B cell (primary cell): ENCODE measurements at regions of chr1 and their contacts with region 1.

Region 1: GRCh38 chr1:59699227-59699847 is 115.4 kb upstream of the HOOK1 start:
- DNase-seq: peak; percentile 67
- ATAC-seq: peak; percentile 44
- H3K4me3 ChIP-seq: no peak overlapping the region
- H3K4me3 Mint-ChIP-seq: no peak overlapping the region
- H3K27ac ChIP-seq: no peak overlapping the region
- H3K27ac Mint-ChIP-seq: no peak overlapping the region
- H3K4me1 ChIP-seq: peaks cover 24 to 29% of the 10 kb centered on the region in 2 donors
- H3K4me1 Mint-ChIP-seq: peaks cover 26% of the 10 kb centered on the region
- H3K27me3 ChIP-seq: no peaks in the 10 kb centered on the region
- H3K27me3 Mint-ChIP-seq: no peaks in the 10 kb centered on the region
- CTCF ChIP-seq: peak; percentile 97

Region 2: DNA sequence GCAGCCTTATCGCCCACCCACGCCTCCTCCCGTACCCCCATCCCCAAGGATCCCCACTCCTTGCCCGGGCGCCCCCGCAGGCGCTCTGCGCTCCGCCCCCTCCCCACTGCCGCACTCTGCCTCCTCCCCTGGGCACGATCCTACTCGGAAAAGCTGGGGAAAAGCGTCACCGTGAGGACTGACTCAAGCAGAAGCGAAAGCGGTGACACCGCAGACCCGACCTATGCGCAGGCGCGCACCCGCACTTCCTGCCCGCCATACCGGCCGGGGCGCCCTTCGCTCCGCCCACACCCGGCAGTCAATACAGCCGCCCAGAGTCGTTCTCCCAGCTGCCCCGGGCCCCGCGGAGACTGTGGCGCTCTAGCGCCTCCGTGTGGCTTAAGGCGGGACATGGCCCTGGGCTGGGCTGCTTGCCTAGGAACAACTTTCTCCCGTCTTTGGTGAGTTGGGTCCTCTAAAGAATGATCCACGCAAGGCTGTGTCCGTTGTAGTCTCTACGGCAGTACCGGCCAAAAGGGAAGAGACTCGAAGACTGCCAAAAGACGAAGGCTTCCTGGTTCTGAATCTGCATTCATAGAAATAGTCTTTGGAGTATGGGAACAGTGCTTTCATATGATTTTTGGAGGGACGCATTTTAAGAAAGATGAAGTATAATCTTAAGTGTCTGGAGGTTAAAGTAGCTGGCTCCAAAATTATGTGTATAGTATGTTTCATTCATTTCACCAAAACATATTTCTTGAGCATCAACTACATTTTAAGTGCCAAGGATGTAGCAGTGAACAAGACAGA is 1152.6 kb before region 1 on chr1 and contains the start of gene OMA1:
- CTCF ChIA-PET with region 1: interaction called, 3 read pairs
- POLR2A ChIA-PET with region 1: no interaction called
- intact Hi-C with region 1: loop called (anchors 10 kb)
- DNase-seq: peak; percentile 98
- ATAC-seq: peak; percentile 93
- H3K4me3 ChIP-seq: peak within 1 kb of the TSS; percentile 52 to 99 (median 83)
- H3K4me3 Mint-ChIP-seq: peak within 1 kb of the TSS; percentile 97
- H3K27ac ChIP-seq: peak within 1 kb of the TSS; percentile 96 to 97
- H3K27ac Mint-ChIP-seq: peak within 1 kb of the TSS; percentile 100
- H3K4me1 ChIP-seq: peaks cover 10 to 13% of the 10 kb centered on the region in 2 donors
- H3K4me1 Mint-ChIP-seq: peaks cover 17% of the 10 kb centered on the region
- H3K27me3 ChIP-seq: peaks cover 0 to 3% (median 0%) of the 10 kb centered on the region in 4 experiments
- H3K27me3 Mint-ChIP-seq: peaks cover 14% of the 10 kb centered on the region
- CTCF ChIP-seq: peak; percentile 94
- total RNA-seq, gene OMA1: 67.5 and 70.4 TPM in 2 replicates

Region 3: DNA sequence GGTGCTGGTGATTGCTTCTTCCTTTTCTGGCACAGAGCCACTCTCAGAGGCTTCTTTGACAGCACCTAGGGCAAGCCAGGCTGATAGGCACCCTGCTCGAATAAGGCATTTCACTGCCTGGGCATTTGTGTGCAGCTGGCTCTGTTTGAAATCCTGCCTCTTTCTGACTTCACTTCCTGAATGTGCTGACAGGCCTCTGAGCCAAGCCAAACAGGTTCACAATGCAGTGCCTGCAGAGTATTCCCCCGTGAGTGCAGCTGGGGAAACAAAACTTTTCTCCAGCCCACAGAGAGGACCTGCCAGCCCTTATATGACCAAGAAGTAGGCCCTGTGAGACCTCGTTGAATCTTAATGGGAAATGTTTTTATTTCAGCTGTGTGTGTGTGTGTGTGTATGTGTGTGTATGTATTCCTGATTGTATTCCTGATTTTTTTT is 925.9 kb before region 1 on chr1:
- CTCF ChIA-PET with region 1: interaction called, 21 read pairs
- POLR2A ChIA-PET with region 1: interaction called, 3 read pairs
- intact Hi-C with region 1: no loop called
- DNase-seq: peak; percentile 45
- ATAC-seq: peak; percentile 83
- H3K4me3 ChIP-seq: no peak overlapping the region
- H3K4me3 Mint-ChIP-seq: peak overlapping the region; percentile 30
- H3K27ac ChIP-seq: peak overlapping the region; percentile 26 to 32
- H3K27ac Mint-ChIP-seq: peak overlapping the region; percentile 69
- H3K4me1 ChIP-seq: peaks cover 18 to 20% of the 10 kb centered on the region in 2 donors
- H3K4me1 Mint-ChIP-seq: peaks cover 23% of the 10 kb centered on the region
- H3K27me3 ChIP-seq: peaks cover 0 to 5% (median 0%) of the 10 kb centered on the region in 4 experiments
- H3K27me3 Mint-ChIP-seq: peaks cover 8% of the 10 kb centered on the region
- CTCF ChIP-seq: no peak

Region 4: GRCh38 chr1:59046730-59047157 is 652.6 kb before region 1 on chr1:
- CTCF ChIA-PET with region 1: interaction called, 11 read pairs
- POLR2A ChIA-PET with region 1: no interaction called
- intact Hi-C with region 1: loop called (anchors 2 kb)
- DNase-seq: peak; percentile 75
- ATAC-seq: peak; percentile 95
- H3K4me3 ChIP-seq: peak overlapping the region in 2 of 5 experiments; percentile 8 to 23
- H3K4me3 Mint-ChIP-seq: peak overlapping the region; percentile 59
- H3K27ac ChIP-seq: peak overlapping the region; percentile 66 to 69
- H3K27ac Mint-ChIP-seq: peak overlapping the region; percentile 92
- H3K4me1 ChIP-seq: peaks cover 24% of the 10 kb centered on the region in 2 donors
- H3K4me1 Mint-ChIP-seq: peaks cover 31% of the 10 kb centered on the region
- H3K27me3 ChIP-seq: no peaks in the 10 kb centered on the region
- H3K27me3 Mint-ChIP-seq: no peaks in the 10 kb centered on the region
- CTCF ChIP-seq: peak; percentile 40

Region 5: GRCh38 chr1:59225594-59226316 is 473.6 kb before region 1 on chr1:
- CTCF ChIA-PET with region 1: interaction called, 20 read pairs
- POLR2A ChIA-PET with region 1: no interaction called
- intact Hi-C with region 1: no loop called
- DNase-seq: no peak
- ATAC-seq: no peak
- H3K4me3 ChIP-seq: no peak overlapping the region
- H3K4me3 Mint-ChIP-seq: no peak overlapping the region
- H3K27ac ChIP-seq: no peak overlapping the region
- H3K27ac Mint-ChIP-seq: no peak overlapping the region
- H3K4me1 ChIP-seq: no peaks in the 10 kb centered on the region
- H3K4me1 Mint-ChIP-seq: no peaks in the 10 kb centered on the region
- H3K27me3 ChIP-seq: no peaks in the 10 kb centered on the region
- H3K27me3 Mint-ChIP-seq: no peaks in the 10 kb centered on the region
- CTCF ChIP-seq: no peak

Region 6: GRCh38 chr1:59570524-59570923 is 128.8 kb before region 1 on chr1:
- CTCF ChIA-PET with region 1: interaction called, 10 read pairs
- POLR2A ChIA-PET with region 1: no interaction called
- intact Hi-C with region 1: no loop called
- DNase-seq: peak; percentile 58
- ATAC-seq: peak; percentile 87
- H3K4me3 ChIP-seq: peak overlapping the region in 2 of 5 experiments; percentile 5 to 27
- H3K4me3 Mint-ChIP-seq: peak overlapping the region; percentile 73
- H3K27ac ChIP-seq: peak overlapping the region in 1 of 2 donors; percentile 40
- H3K27ac Mint-ChIP-seq: peak overlapping the region; percentile 50
- H3K4me1 ChIP-seq: peaks cover 19 to 25% of the 10 kb centered on the region in 2 donors
- H3K4me1 Mint-ChIP-seq: peaks cover 30% of the 10 kb centered on the region
- H3K27me3 ChIP-seq: no peaks in the 10 kb centered on the region
- H3K27me3 Mint-ChIP-seq: no peaks in the 10 kb centered on the region
- CTCF ChIP-seq: no peak